ENCODE measurements at regions of chr1 and their contacts with region 1.

Region 1: GRCh38 chr1:115041654-115042053 is 12.0 kb downstream of the TSHB start:
- DNase-seq: peak; percentile 33
- H3K4me3 ChIP-seq: no peak overlapping the region
- H3K27ac ChIP-seq: no peak overlapping the region
- H3K4me1 ChIP-seq: no peaks in the 10 kb centered on the region
- H3K27me3 ChIP-seq: no peaks in the 10 kb centered on the region
- CTCF ChIP-seq: peak; percentile 62 to 83

Region 2: GRCh38 chr1:114986286-114986685 is 55.4 kb before region 1 on chr1:
- CTCF ChIA-PET with region 1: no interaction called
- dilution Hi-C with region 1: no loop called
- in situ Hi-C with region 1: loop called (anchors 10 kb)
- intact Hi-C with region 1: no loop called
- DNase-seq: peak; percentile 64
- H3K4me3 ChIP-seq: no peak overlapping the region
- H3K27ac ChIP-seq: no peak overlapping the region
- H3K4me1 ChIP-seq: peaks cover 7% of the 10 kb centered on the region
- H3K27me3 ChIP-seq: no peaks in the 10 kb centered on the region
- CTCF ChIP-seq: no peak

Measured in mammary epithelial cell (primary cell).